GM10248 (cell line): ENCODE measurements at regions of chr3 and their contacts with region 1.

Region 1: GRCh38 chr3:52471371-52472238 is 16.2 kb downstream of the NISCH start:
- DNase-seq: peak; percentile 67
- CTCF ChIP-seq: peak; percentile 78

Region 2: DNA sequence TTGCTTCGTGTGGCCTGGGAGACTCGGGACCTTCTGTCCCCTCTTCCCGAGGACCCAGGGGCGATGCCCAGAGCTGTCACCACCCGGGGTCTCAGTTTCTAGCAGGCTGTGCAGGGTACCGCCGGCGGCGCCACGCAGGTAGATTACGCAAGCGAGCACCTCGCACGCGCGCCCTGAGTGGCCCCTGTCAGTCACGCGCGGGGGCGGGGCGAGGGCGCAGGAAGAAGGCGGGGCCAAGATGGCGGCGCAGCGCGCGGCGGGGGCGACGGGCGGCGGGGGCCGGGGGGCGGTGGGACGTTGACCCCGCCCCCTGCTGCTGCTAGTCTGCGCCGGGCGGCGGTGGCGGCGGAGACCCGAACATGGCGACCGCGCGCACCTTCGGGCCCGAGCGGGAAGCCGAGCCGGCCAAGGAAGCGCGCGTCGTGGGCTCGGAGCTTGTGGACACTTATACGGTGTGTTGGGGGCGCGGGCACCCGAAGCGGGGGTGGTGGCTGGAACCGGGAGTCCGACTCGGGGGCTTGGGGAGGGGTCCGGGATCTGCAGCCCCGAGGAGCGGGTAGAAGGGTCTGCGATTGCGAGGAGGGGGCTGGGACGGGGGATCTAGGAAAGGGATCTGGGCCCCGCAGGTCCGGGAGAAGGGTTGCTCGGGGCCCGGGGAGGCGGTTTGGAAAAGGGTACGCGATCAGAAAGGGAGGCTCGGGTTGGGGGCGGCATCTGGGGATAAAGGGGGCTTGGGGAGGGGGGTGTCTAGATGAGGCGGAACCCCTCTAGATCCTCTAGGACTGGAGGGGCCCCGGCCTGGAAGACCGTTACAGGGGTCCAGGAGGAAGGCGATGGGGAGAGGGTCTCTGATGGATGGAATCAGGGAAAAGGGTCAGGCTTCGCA is 16.1 kb before region 1 on chr3 and contains the start of gene NISCH:
- CTCF ChIA-PET with region 1: interaction called, 53 read pairs
- POLR2A ChIA-PET with region 1: no interaction called
- DNase-seq: peak; percentile 98
- CTCF ChIP-seq: no peak

Region 3: DNA sequence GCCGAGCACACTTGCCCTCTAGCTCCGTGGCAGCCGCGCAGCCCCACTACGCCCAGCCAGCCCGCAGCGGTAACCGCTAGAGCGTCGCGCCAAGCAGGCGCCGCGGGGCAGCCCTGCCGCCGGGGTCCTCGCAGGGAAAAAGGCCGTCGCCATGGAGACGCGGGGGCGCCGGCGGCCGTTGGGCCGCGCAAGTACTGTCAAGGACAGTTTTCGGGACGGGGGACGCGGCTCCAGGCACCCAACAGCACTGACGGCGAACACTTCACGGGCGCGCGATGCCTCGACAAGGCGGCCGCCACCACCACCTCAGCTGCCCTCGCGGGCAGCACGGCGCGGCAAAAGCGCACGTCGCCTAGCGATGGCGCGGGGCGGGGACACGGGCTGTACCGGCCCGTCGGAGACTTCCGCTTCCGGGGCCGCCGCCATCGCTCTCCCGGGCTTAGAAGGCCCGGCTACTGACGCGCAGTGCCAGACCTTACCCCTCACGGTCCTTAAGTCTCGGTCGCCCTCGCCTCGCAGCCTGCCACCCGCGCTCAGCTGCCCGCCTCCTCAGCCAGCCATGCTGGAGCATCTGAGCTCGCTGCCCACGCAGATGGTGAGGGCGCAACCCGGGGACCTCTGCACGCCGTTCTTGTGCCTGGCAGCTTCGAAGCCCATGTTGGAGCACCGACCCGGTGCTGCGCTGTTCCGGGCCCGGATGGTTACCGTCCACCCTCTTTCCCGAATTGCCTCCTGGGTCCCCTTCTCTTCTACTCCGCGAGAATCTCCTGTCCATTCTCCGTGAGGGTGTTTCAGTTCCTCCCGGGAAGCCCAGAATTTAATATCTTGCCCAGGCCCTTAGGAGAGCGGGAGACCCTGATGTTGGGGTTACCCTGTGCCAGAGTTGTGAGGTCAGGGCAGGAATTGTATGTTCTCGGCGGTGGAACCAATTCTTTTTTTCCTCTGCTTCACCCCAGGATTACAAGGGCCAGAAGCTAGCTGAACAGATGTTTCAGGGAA is 234.4 kb after region 1 on chr3 and contains the starts of genes GLT8D1 and SPCS1:
- CTCF ChIA-PET with region 1: no interaction called
- POLR2A ChIA-PET with region 1: no interaction called
- DNase-seq: peak; percentile 91
- CTCF ChIP-seq: no peak

Region 4: DNA sequence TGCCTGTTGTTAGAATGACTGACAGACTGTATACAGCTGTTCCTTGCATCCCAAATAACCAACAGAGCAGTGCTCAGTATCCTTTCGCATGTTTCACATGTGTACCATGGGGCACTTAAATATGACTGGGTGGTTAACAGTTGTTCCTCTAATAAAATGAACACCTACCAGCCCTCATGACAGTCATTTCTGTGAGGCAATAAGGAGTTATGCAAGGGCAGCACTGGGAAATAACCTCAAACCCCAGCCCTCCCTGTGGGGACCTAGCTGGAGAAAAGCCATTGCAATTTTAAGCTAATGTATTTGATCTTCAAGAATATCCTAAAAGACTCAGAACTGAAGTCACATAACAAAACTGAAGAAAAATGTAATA is 651.3 kb after region 1 on chr3:
- CTCF ChIA-PET with region 1: no interaction called
- POLR2A ChIA-PET with region 1: no interaction called
- DNase-seq: no peak
- CTCF ChIP-seq: no peak